CD4-positive, alpha-beta memory T cell (primary cell): ENCODE measurements at regions of chr17 and their contacts with region 1.

Region 1: DNA sequence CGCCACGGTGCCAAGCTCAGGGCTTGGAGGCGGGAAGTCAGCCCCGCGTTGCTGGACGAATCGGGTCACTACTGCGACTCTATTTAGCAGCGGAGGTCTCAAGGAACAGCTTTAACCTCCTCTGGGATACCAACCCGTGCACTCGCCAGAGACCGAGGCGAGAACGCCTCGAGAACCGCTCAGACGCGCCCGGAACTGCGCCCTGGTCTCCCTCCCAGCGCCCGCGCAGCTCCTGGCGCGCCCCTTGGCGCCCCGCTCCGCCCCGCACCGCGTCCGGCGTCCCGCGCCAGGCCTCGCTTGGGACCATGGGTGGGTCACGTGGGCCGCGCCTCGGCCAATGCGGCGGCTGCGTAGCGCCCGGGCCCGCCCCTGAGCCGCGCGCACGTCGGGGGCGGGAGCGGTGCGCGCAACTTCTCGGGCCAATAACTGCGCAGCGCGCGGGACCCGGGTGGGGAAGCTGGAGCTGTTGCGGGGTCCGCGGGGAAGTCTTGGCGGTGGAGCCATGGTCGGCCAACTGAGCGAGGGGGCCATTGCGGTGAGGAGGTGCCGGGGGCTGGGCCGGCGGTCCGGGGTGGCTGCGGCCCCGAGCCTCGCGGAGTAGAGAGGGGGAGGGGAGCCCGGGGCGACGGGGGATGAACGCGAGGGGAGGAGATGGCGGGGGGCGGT is at the starts of genes RPA1 and SMYD4:
- DNase-seq: peak; percentile 87 to 91 (median 88)
- H3K4me3 ChIP-seq: peak within 1 kb of the TSS; percentile 58 to 73
- H3K4me3 Mint-ChIP-seq: peak within 1 kb of the TSS; percentile 92 to 99 (median 97)
- H3K27ac ChIP-seq: peak within 1 kb of the TSS; percentile 67
- H3K27ac Mint-ChIP-seq: peak within 1 kb of the TSS; percentile 89 to 99 (median 97)
- H3K4me1 ChIP-seq: peaks cover 59% of the 10 kb centered on the region
- H3K4me1 Mint-ChIP-seq: peaks cover 33 to 70% (median 52%) of the 10 kb centered on the region in 4 donors
- H3K27me3 ChIP-seq: no peaks in the 10 kb centered on the region
- H3K27me3 Mint-ChIP-seq: no peaks in the 10 kb centered on the region
- total RNA-seq, gene RPA1: 103 to 119 TPM
- total RNA-seq, gene SMYD4: 31.2 to 31.5 TPM

Region 2: DNA sequence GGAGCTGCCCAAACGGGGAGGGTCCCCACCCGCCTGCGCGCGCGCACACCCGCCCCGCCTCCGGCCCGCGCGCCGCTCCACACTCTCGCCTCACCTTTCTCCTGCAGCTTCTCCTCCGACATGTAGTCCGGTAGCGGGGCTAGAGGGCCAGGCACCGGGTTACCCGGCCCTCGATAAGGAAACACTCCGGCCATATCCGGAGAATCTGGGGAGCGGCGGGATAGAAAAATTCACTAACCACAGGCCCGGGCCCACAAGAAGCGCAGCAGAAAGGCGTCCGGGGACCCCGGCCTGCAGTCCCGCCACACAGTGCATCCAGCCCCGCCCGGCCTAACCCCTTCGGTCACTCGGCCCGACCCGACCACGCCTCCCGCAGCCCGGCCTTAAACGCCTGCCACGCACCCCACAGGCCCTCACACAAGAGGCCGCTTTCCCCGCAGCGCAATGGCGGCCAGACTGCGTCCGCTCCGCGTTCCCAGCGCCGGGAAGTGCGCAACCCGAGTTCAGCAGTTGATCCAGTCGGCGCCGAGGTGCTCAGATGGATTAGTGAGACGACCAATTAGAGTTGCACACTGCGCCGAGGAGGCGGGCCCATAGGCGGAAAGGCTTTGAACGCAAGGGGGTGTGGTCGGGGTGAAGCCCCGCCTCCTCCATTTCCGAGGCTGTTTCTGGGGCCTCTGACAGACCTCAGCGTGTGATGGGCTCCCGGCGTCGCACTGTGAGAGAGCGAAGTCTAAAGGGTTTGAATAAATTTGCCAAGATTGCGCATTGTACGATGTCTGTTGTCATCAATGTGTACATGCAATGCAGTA is 145.1 kb before region 1 on chr17 and contains the start of gene PRPF8:
- CTCF ChIA-PET with region 1: no interaction called
- POLR2A ChIA-PET with region 1: interaction called, 8 read pairs
- intact Hi-C with region 1: loop called (anchors 1 kb)
- DNase-seq: peak; percentile 98 to 99 (median 99)
- H3K4me3 ChIP-seq: peak within 1 kb of the TSS; percentile 83 to 96
- H3K4me3 Mint-ChIP-seq: peak within 1 kb of the TSS; percentile 97 to 99 (median 99)
- H3K27ac ChIP-seq: peak within 1 kb of the TSS; percentile 96
- H3K27ac Mint-ChIP-seq: peak within 1 kb of the TSS; percentile 93 to 100 (median 99)
- H3K4me1 ChIP-seq: peaks cover 29% of the 10 kb centered on the region
- H3K4me1 Mint-ChIP-seq: peaks cover 32 to 56% (median 41%) of the 10 kb centered on the region in 4 donors
- H3K27me3 ChIP-seq: no peaks in the 10 kb centered on the region
- H3K27me3 Mint-ChIP-seq: no peaks in the 10 kb centered on the region
- total RNA-seq, gene PRPF8: 429 to 464 TPM

Region 3: GRCh38 chr17:1764284-1764683 is 65.4 kb before region 1 on chr17:
- CTCF ChIA-PET with region 1: no interaction called
- POLR2A ChIA-PET with region 1: interaction called, 11 read pairs
- intact Hi-C with region 1: no loop called
- DNase-seq: peak; percentile 43 to 83 (median 76)
- H3K4me3 ChIP-seq: no peak overlapping the region
- H3K4me3 Mint-ChIP-seq: peak overlapping the region; percentile 40 to 86 (median 66)
- H3K27ac ChIP-seq: peak overlapping the region; percentile 43
- H3K27ac Mint-ChIP-seq: peak overlapping the region; percentile 51 to 97 (median 92)
- H3K4me1 ChIP-seq: peaks cover 34% of the 10 kb centered on the region
- H3K4me1 Mint-ChIP-seq: peaks cover 17 to 49% (median 22%) of the 10 kb centered on the region in 4 donors
- H3K27me3 ChIP-seq: no peaks in the 10 kb centered on the region
- H3K27me3 Mint-ChIP-seq: no peaks in the 10 kb centered on the region

Region 4: DNA sequence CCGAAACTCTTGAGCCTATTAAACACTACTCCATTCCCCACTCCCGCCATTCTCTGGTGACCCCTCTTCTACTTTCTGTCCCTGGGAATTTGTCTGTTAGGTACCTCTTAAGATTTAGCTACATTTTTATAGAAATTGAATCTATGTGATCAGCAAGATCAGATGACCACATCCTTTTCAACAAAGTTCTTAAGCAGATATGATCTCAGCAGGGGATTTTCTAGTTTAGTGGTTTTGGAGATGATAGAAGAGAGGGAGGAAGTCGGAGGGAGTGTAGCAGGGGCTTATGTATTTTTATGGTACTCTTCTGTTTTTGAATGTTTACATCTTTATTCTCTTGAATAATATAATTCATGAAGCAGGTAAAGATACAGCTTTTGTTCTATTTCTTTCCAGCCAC is 40.9 kb after region 1 on chr17:
- CTCF ChIA-PET with region 1: interaction called, 4 read pairs
- POLR2A ChIA-PET with region 1: interaction called, 12 read pairs
- intact Hi-C with region 1: loop called (anchors 5 kb)
- DNase-seq: peak; percentile 59 to 84 (median 76)
- H3K4me3 ChIP-seq: peak overlapping the region in 1 of 2 donors; percentile 12
- H3K4me3 Mint-ChIP-seq: peak overlapping the region; percentile 75 to 88 (median 84)
- H3K27ac ChIP-seq: peak overlapping the region; percentile 65
- H3K27ac Mint-ChIP-seq: peak overlapping the region; percentile 92 to 99 (median 98)
- H3K4me1 ChIP-seq: peaks cover 62% of the 10 kb centered on the region
- H3K4me1 Mint-ChIP-seq: peaks cover 46 to 75% (median 55%) of the 10 kb centered on the region in 4 donors
- H3K27me3 ChIP-seq: no peaks in the 10 kb centered on the region
- H3K27me3 Mint-ChIP-seq: no peaks in the 10 kb centered on the region

Region 5: GRCh38 chr17:2041561-2042366 is 212.0 kb after region 1 on chr17 and contains the start of gene OVCA2:
- CTCF ChIA-PET with region 1: no interaction called
- POLR2A ChIA-PET with region 1: no interaction called
- intact Hi-C with region 1: loop called (anchors 5 kb)
- DNase-seq: peak; percentile 96 to 98 (median 97)
- H3K4me3 ChIP-seq: peak within 1 kb of the TSS; percentile 64 to 79
- H3K4me3 Mint-ChIP-seq: peak within 1 kb of the TSS; percentile 90 to 94 (median 92)
- H3K27ac ChIP-seq: peak within 1 kb of the TSS; percentile 85
- H3K27ac Mint-ChIP-seq: peak within 1 kb of the TSS; percentile 89 to 98 (median 96)
- H3K4me1 ChIP-seq: peaks cover 24% of the 10 kb centered on the region
- H3K4me1 Mint-ChIP-seq: peaks cover 6 to 32% (median 14%) of the 10 kb centered on the region in 4 donors
- H3K27me3 ChIP-seq: no peaks in the 10 kb centered on the region
- H3K27me3 Mint-ChIP-seq: no peaks in the 10 kb centered on the region
- total RNA-seq, gene OVCA2: 27.9 to 36.7 TPM